Left cardiac atrium (tissue), 4 donors: ENCODE measurements at regions of chr2 and their contacts with region 1.

Region 1: DNA sequence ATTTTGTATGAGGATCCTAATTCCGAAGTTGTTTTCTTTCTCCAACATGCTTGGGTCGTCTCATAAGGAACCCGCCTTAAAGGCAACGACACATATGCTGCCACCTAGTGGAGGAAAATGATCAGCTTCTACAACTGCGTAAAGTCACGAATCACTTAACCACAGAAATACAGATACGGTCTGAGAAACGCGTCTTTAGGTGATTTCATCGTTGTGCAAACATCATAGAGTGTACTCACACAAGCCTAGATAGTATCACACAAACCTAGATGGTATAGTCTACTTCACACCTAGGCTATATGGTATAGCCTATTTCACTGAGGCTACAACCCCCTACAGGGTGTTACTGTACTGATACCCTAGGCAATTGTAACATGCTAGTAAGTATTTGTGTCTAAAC is 13.1 kb downstream of the GNLY start:
- DNase-seq: no peak
- ATAC-seq: peak; percentile 38 to 48

Region 2: DNA sequence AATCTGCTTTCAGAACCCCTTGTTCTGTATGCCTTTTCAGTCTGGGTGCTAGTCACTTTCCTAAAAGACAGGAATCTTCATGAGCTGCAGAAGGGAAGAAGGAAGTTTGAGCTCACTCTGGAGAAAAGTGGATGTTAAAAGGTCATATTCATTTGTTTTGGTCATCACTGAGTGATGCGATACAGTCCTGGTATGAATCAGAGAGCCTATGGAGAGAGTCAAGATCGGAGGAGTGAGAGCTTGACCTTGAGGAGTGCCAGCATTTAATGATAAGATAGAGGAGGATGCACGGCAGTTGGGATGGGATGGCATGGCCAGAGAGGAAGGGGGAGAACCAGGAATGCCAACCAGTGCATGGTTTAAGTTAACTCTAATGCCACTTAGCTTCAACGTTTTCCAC is 71.7 kb before region 1 on chr2:
- intact Hi-C with region 1: loop called in 1 of 2 experiments (anchors 5 kb)
- DNase-seq: no peak
- ATAC-seq: peak in 1 of 2 donors; percentile 72

Region 3: GRCh38 chr2:85648619-85649018 is 58.7 kb before region 1 on chr2:
- intact Hi-C with region 1: loop called in 1 of 2 experiments (anchors 10 kb)
- DNase-seq: no peak
- ATAC-seq: peak in 1 of 2 donors; percentile 18

Region 4: GRCh38 chr2:85680707-85681353 is 26.5 kb before region 1 on chr2:
- intact Hi-C with region 1: loop called in 1 of 2 experiments (anchors 2 kb)
- DNase-seq: no peak
- ATAC-seq: no peak